Activated B cell treated with CpG ODN at 0.5 μM for 24 hours (primary cell): ENCODE measurements at regions of chr21 and their contacts with region 1.

Region 1: DNA sequence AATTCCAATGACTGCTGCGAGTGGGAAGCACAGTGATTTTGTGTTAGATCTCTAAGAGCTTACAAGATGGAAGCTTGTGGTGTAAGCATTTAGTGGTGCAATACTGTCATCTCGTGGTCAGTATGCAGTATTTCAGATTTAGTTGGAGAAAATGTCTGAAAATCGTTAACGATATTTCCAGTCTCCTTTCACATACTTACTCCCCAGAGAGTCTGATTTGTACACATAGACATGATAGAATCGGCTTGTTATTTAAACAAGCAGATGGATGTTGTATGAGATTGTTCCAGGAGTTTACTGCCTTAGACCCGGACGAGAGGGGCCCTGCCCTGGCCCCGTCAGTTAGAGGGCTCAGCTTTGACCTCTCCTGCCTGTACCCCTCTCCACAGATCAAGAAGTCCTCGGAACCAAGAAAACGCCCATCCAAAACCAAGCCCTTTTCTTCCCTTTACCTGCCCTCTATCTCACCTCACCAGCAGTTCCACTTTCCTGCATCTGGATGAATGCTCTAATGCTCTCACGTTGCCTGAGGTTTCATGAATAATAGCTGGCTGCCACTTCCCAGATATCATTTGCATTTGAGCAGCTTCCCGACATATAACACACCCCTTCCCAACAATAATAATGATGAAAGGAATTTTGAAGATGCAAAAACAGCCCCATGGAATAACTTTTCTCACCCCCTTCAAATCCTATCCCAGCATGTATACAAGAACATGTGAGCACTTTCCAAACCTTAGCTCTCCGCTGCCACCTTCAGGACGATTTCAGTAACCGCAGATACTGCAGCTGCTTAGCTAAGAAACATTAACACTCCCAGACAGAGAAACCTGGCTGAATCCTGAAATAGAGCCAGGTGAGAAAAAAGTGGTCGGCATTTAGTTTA is 247.3 kb downstream of the LTN1 start:
- DNase-seq: peak; percentile 29
- ATAC-seq: peak; percentile 88
- H3K4me3 Mint-ChIP-seq: no peak overlapping the region
- H3K27ac Mint-ChIP-seq: no peak overlapping the region
- H3K4me1 Mint-ChIP-seq: no peaks in the 10 kb centered on the region
- H3K27me3 Mint-ChIP-seq: no peaks in the 10 kb centered on the region
- CTCF ChIP-seq: no peak

Region 2: GRCh38 chr21:26815197-26815596 is 1930.2 kb before region 1 on chr21:
- CTCF ChIA-PET with region 1: interaction called, 15 read pairs
- POLR2A ChIA-PET with region 1: no interaction called
- intact Hi-C with region 1: no loop called
- DNase-seq: no peak
- ATAC-seq: no peak
- H3K4me3 Mint-ChIP-seq: no peak overlapping the region
- H3K27ac Mint-ChIP-seq: no peak overlapping the region
- H3K4me1 Mint-ChIP-seq: no peaks in the 10 kb centered on the region
- H3K27me3 Mint-ChIP-seq: no peaks in the 10 kb centered on the region
- CTCF ChIP-seq: no peak

Region 3: DNA sequence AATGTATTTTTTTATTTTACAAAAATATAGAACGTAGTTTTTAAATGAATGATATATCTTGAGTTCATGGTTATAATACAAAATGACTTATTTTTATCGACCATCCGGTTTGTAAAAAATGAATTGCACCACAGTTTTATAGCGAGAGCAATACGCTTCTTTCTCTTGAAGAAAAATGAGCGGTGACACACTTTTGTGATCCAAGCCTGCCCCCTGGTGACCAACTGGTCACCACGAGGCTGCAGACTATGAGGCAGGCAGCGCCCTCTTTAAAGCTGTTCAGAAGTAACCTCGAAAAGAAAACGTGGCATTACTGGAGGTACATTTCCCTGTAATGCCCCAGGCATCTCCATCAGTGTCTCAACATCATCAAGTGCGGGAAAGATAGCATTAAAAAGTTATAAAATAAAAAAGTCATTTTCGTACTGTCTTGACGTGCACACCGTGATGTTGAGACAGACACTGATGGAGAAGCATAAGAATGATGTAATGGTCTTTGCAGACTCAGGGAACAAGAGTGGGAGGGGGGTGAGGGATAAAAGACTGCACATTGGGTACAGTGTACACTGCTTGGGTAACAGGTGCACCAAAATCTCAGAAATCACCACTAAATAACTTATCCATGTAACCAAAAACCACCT is 1044.3 kb before region 1 on chr21:
- CTCF ChIA-PET with region 1: interaction called, 5 read pairs
- POLR2A ChIA-PET with region 1: no interaction called
- intact Hi-C with region 1: loop called (anchors 5 kb)
- DNase-seq: no peak
- ATAC-seq: no peak
- H3K4me3 Mint-ChIP-seq: no peak overlapping the region
- H3K27ac Mint-ChIP-seq: no peak overlapping the region
- H3K4me1 Mint-ChIP-seq: no peaks in the 10 kb centered on the region
- H3K27me3 Mint-ChIP-seq: no peaks in the 10 kb centered on the region
- CTCF ChIP-seq: no peak

Region 4: DNA sequence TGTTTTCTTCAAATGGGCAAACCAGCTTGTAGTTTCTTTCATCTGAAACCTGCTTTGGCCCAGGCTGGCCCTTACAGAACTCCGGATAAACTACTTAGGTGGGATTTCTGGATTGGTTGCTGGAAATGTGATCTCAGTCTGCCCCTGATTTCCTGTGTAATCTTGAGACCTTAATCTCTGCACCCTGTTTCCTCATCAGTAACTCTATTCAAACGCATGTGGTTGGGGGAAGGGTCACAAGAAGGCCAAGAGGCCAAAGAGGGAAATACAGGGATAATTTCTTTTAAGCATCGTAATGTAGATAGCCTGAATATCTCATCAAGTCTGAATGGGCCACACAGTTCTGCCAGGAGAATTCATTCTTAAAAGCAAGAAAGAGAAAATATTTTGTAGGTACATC is 236.3 kb before region 1 on chr21:
- CTCF ChIA-PET with region 1: interaction called, 193 read pairs
- POLR2A ChIA-PET with region 1: no interaction called
- intact Hi-C with region 1: no loop called
- DNase-seq: no peak
- ATAC-seq: no peak
- H3K4me3 Mint-ChIP-seq: no peak overlapping the region
- H3K27ac Mint-ChIP-seq: no peak overlapping the region
- H3K4me1 Mint-ChIP-seq: no peaks in the 10 kb centered on the region
- H3K27me3 Mint-ChIP-seq: peaks cover 4% of the 10 kb centered on the region
- CTCF ChIP-seq: no peak

Region 5: DNA sequence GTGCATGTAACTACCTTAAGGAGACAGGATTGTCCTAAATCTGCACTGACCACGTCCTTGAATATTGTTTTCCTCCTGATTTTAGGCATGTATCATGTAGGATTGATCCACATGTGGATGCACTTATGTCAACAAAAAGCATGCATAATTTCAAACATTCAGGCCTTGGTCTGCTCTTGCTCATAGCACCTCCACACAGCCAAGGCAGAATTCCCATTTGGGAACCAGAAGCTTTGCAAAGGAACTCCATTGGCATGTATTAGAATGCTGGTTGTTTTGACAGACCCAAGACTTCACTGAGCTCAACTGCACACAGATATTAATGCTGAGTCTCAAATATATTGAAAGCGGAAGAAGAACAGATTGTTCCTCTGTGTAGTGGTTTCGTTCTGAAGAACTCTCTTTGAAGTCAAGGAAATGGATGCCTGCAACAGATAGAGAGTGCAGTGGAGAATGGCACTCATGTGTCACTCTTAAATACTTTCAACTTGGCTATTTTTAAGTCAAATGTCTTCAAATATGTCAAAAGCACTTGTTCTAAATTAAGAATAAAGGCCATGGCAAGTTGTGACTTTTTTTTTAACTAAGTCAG is 140.3 kb before region 1 on chr21:
- CTCF ChIA-PET with region 1: interaction called, 4 read pairs
- POLR2A ChIA-PET with region 1: no interaction called
- intact Hi-C with region 1: loop called (anchors 1 kb)
- DNase-seq: no peak
- ATAC-seq: peak; percentile 99
- H3K4me3 Mint-ChIP-seq: peak overlapping the region; percentile 54
- H3K27ac Mint-ChIP-seq: no peak overlapping the region
- H3K4me1 Mint-ChIP-seq: peaks cover 35% of the 10 kb centered on the region
- H3K27me3 Mint-ChIP-seq: no peaks in the 10 kb centered on the region
- CTCF ChIP-seq: no peak

Region 6: GRCh38 chr21:28633839-28634555 is 111.4 kb before region 1 on chr21:
- CTCF ChIA-PET with region 1: no interaction called
- POLR2A ChIA-PET with region 1: no interaction called
- intact Hi-C with region 1: no loop called
- DNase-seq: no peak
- ATAC-seq: no peak
- H3K4me3 Mint-ChIP-seq: no peak overlapping the region
- H3K27ac Mint-ChIP-seq: no peak overlapping the region
- H3K4me1 Mint-ChIP-seq: peaks cover 4% of the 10 kb centered on the region
- H3K27me3 Mint-ChIP-seq: no peaks in the 10 kb centered on the region
- CTCF ChIP-seq: no peak